MCF 10A (cell line): ENCODE measurements at regions of chr12 and their contacts with region 1.

Region 1: DNA sequence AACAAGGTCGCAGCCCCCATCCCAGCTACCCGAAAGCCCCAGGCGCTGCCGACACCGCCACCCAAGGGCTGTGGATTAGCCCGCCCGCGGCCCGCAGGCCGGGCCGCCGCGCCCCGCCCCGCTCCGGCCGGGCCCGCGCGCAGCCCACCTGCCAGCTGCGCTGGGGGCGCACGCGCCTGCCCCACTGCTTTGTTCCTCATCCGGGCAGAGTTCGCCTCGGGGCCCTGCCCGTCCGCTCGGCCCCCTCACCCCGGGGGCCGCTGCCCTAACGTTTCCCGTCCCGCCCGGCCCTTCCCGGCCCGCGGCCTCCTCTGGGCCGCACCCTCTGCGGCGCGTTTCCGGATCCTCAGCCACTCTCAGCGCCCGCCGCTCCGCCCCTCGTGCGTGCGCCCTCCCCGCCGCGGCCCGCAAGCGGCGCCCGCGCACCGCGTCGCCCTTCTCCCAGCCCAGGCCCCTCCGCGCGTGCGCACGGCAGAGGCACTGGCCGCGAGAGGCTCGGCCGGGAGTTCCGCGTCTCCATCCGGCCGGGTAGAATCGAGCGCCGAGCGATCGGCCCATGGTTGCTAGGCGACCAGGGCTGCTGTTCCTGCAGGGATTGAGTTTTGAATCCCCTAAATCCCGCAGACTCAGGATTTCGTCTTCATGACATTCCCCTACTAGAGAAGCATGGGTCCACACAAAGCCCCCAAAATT is at the start of gene PRDM4:
- DNase-seq: peak; percentile 92
- H3K4me3 Mint-ChIP-seq: peak within 1 kb of the TSS; percentile 87
- H3K27ac Mint-ChIP-seq: peak within 1 kb of the TSS; percentile 93
- H3K4me1 Mint-ChIP-seq: peaks cover 5% of the 10 kb centered on the region
- H3K27me3 Mint-ChIP-seq: no peaks in the 10 kb centered on the region
- CTCF ChIP-seq: no peak
- total RNA-seq, gene PRDM4: 45.1 and 45.8 TPM in 2 replicates

Region 2: DNA sequence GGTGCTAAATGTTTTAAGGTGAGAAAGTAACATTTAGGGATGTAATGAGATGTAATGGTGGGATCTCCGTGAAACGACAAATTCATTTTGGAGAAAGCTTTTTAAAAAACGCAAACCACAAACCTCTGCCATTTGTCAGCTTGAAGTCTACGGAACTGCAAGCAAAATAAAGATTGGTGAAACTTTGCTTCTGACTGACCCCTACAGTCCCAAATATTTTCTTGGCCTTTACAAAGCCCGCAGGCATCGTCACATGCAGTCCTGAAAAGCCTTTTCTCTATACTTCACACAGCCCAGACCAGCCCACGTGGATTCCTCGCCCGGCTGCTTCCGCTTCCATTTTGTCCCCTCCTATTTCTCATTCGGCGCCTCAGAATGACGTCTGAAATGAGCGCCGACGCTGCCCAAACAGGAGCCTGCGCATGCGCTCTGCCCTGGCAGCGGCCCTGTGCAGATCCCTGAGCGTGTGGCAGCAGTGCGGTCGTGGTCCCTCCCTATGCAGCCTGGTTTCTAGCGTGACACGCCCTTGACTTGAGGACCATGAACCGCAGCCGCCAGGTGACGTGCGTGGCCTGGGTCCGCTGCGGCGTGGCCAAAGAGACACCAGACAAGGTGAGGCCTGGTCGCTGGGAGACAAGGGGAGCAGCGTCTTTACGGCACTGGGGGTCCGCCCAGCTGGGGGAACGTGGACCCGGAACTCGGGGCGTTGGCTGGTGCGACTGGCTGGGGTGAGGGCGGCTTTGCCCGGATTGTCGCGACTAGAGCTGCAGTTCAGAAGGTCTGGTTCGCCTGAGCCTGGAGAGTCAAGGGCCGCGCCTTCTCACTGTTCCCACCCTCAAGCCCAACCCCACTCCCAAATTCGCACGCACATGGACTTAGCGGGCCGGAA is 75.4 kb before region 1 on chr12 and contains the start of gene PWP1:
- CTCF ChIA-PET with region 1: interaction called, 3 read pairs
- POLR2A ChIA-PET with region 1: interaction called, 36 read pairs
- intact Hi-C with region 1: loop called (anchors 5 kb)
- DNase-seq: peak; percentile 94
- H3K4me3 Mint-ChIP-seq: peak within 1 kb of the TSS; percentile 90
- H3K27ac Mint-ChIP-seq: peak within 1 kb of the TSS; percentile 98
- H3K4me1 Mint-ChIP-seq: peaks cover 18% of the 10 kb centered on the region
- H3K27me3 Mint-ChIP-seq: no peaks in the 10 kb centered on the region
- CTCF ChIP-seq: no peak
- total RNA-seq, gene PWP1: 41.5 and 49.7 TPM in 2 replicates

Region 3: GRCh38 chr12:107731366-107731765 is 29.6 kb before region 1 on chr12:
- CTCF ChIA-PET with region 1: no interaction called
- POLR2A ChIA-PET with region 1: interaction called, 10 read pairs
- intact Hi-C with region 1: no loop called
- DNase-seq: no peak
- H3K4me3 Mint-ChIP-seq: no peak overlapping the region
- H3K27ac Mint-ChIP-seq: no peak overlapping the region
- H3K4me1 Mint-ChIP-seq: no peaks in the 10 kb centered on the region
- H3K27me3 Mint-ChIP-seq: no peaks in the 10 kb centered on the region
- CTCF ChIP-seq: no peak

Region 4: DNA sequence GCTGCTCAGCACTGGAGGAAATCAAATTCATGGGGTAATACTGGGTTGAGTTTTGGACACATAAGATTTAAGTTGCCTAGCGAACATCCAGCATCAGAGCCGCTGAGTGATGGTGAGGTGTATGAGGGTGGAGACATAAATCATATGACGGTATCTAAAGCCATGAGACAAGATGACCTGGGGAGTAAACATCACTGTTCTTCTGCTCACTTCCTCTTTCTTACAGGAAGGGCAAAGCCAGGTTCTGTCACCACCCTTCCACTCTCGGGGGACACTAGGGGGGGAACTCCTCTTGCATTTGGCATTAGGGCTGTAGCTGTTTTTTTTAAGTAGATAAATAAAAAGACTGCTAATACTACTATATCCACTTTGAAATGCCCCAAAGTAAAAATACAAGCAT is 24.0 kb before region 1 on chr12:
- CTCF ChIA-PET with region 1: no interaction called
- POLR2A ChIA-PET with region 1: interaction called, 18 read pairs
- intact Hi-C with region 1: no loop called
- DNase-seq: no peak
- H3K4me3 Mint-ChIP-seq: no peak overlapping the region
- H3K27ac Mint-ChIP-seq: no peak overlapping the region
- H3K4me1 Mint-ChIP-seq: no peaks in the 10 kb centered on the region
- H3K27me3 Mint-ChIP-seq: no peaks in the 10 kb centered on the region
- CTCF ChIP-seq: no peak

Region 5: DNA sequence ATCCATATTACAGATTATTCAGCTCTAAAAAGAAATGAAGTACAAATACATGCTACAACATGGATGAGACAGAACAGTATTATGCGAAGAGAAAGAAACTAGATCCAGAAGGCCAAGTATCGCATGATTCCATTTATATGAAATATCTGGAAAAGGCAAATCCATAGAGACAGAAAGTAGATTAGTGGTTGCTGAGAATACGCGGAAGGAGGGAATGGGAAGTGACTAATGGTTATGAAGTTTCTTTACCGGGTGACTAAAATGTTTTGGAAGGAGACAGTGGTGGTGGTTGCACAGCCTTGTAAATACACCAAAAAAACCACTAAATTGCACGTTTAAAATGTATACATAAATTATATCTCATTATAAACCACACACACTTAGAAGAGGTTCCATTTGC is 12.5 kb before region 1 on chr12:
- CTCF ChIA-PET with region 1: interaction called, 6 read pairs
- POLR2A ChIA-PET with region 1: interaction called, 48 read pairs
- intact Hi-C with region 1: no loop called
- DNase-seq: peak; percentile 59
- H3K4me3 Mint-ChIP-seq: no peak overlapping the region
- H3K27ac Mint-ChIP-seq: no peak overlapping the region
- H3K4me1 Mint-ChIP-seq: no peaks in the 10 kb centered on the region
- H3K27me3 Mint-ChIP-seq: no peaks in the 10 kb centered on the region
- CTCF ChIP-seq: no peak

Region 6: DNA sequence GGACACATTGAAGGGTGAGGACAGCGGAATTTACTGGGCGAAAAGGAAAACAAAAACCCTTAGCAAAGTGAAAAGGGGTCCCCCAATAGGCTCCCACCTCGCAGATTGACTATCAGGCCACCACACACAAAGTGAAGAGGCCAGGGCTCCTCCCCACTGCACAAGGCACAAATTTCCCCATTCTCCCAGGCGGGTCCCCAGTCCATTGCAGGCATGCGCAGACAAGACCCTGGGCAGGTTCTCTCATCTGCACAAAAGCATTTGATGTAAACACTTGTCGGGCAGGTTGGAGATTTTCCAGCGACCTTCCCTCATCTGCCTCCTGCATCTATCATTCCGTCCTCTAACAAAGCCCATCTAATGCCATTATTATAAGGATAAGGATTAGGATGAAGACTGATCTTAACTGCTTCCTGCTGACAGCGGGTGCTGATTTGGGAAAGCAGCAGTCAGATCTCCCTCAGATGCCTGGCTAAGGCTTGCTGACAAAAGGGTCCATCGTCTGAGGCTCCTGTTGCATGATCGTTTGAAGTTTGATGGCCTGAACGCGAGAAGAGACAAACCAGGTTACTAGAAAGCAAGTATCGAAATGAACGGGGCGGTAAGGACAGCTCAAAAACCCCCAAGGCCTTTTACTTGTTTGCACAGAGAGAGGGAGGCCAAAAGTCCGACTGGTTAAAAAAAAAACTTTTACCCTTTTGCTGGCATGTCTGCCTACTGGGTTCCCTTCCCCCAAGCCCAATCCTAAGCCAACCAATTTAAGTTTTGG is 27.9 kb after region 1 on chr12:
- CTCF ChIA-PET with region 1: no interaction called
- POLR2A ChIA-PET with region 1: no interaction called
- intact Hi-C with region 1: no loop called
- DNase-seq: no peak
- H3K4me3 Mint-ChIP-seq: no peak overlapping the region
- H3K27ac Mint-ChIP-seq: no peak overlapping the region
- H3K4me1 Mint-ChIP-seq: no peaks in the 10 kb centered on the region
- H3K27me3 Mint-ChIP-seq: peaks cover 20% of the 10 kb centered on the region
- CTCF ChIP-seq: no peak

Region 7: DNA sequence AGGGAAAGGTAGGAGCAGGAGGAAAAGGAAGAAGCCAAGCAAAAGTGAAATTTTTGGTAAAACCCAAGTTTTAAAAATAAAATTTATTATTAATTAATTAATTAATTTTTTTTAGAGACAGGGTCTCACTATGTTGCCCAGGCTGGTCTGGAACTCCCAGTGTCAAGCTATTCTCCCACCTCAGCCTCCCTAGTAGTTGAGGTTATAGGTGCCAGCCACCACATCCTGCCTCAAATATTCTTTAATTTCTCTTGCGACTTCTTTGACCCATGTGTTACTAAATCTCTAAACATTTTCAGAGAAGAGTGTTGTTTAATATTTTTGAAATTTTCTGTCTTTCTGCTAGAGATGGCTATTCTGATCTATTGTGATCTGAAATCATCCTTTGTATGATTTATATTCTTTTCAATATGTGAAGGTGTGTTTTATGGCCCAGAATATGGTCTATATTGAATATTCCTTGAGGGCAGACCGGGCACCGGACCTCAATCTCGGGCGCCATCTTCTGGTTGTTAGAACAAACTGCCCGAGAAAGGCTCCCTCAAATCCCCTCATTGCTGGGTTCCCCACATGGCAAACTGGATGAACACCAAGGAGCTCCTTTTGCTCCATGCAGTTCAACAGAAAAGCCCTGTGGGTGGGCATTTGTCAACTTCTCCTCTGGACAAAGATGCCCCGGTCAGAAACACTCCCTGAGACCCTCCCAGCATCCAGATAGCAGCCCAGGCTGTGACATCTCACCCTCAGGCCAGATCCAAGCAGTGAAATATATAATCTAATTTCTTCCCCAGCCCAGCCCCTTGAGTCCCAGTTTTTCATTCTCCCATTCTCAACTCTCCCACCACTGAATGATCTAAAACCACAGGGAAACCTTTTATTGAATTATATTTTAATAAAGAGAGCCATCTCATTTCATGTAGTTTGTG is 124.1 kb after region 1 on chr12:
- CTCF ChIA-PET with region 1: interaction called, 13 read pairs
- POLR2A ChIA-PET with region 1: interaction called, 4 read pairs
- intact Hi-C with region 1: loop called (anchors 1 kb)
- DNase-seq: peak; percentile 64
- H3K4me3 Mint-ChIP-seq: no peak overlapping the region
- H3K27ac Mint-ChIP-seq: no peak overlapping the region
- H3K4me1 Mint-ChIP-seq: no peaks in the 10 kb centered on the region
- H3K27me3 Mint-ChIP-seq: peaks cover 23% of the 10 kb centered on the region
- CTCF ChIP-seq: peak; percentile 72